Activated CD4-positive, alpha-beta memory T cell treated with anti-CD3 and anti-CD28 coated beads for 36 hours (primary cell): ENCODE measurements at regions of chrX and their contacts with region 1.

Region 1: GRCh38 chrX:153947009-153947769 is 2.7 kb upstream of the RENBP start:
- DNase-seq: peak; percentile 85
- H3K4me3 Mint-ChIP-seq: no peak overlapping the region
- H3K27ac Mint-ChIP-seq: peak overlapping the region; percentile 82
- H3K4me1 Mint-ChIP-seq: peaks cover 7% of the 10 kb centered on the region
- H3K27me3 Mint-ChIP-seq: no peaks in the 10 kb centered on the region

Region 2: GRCh38 chrX:153560000-153560399 is 387.2 kb before region 1 on chrX:
- CTCF ChIA-PET with region 1: no interaction called
- POLR2A ChIA-PET with region 1: no interaction called
- intact Hi-C with region 1: no loop called
- DNase-seq: no peak
- H3K4me3 Mint-ChIP-seq: no peak overlapping the region
- H3K27ac Mint-ChIP-seq: no peak overlapping the region
- H3K4me1 Mint-ChIP-seq: no peaks in the 10 kb centered on the region
- H3K27me3 Mint-ChIP-seq: no peaks in the 10 kb centered on the region

Region 3: DNA sequence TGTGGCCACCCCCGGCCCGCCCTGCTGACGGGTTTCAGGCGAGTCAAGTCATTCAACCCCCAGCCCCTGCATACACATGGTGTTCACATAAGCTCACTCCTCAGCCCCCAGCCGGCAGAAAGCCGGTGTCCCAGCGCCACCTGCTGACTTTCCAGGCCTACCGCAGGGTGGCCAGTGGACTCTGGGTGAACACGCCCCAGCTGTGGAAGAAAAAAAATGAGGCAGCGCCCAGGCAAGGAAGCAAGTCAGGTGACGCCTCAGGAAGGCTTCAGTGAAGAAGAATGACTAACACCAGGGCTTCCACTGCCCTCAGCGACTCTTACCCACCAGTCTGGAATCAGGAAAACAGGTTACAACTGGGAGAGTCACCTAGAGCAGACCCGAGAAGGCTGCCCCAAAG is 238.8 kb before region 1 on chrX:
- CTCF ChIA-PET with region 1: no interaction called
- POLR2A ChIA-PET with region 1: no interaction called
- intact Hi-C with region 1: no loop called
- DNase-seq: peak; percentile 65
- H3K4me3 Mint-ChIP-seq: no peak overlapping the region
- H3K27ac Mint-ChIP-seq: peak overlapping the region; percentile 23
- H3K4me1 Mint-ChIP-seq: peaks cover 7% of the 10 kb centered on the region
- H3K27me3 Mint-ChIP-seq: no peaks in the 10 kb centered on the region

Region 4: DNA sequence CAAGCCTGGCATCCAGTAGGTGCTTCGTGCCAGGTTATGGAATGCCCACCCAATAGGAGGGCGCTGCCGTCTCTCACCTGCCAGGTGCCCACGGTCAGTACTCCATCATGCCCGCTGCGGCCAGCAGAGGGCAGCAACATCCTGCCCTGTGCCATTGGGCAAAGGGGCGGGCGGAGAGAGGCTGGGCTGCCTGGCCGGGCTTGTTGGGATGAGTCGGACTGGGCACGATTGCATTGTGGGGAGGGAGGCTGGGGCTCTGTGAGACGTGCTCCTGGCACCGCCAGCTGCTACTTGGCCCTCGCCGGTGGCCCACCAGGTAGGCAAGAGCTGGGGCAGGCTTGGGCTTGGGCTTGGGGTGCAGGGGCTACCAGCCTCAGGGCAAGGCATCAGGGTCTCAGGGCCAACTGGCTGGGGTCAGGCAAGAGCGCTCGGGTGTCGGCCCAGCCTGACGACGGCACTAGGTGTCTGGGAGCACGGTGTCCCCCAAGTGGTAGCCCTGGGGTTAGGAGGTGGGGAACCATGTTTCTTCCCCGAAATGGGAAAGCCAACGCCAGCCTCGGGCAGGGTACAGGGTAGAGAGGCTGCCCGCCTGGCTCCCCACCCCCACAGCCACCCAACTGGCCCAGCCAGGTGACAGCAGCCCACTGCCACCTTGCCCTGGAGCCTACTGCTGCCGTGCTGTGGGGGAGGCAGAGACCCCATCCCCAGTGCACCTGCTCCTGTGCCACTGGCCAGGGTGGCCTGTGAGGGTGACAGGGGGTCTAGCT is 183.0 kb before region 1 on chrX and contains the start of gene PLXNB3:
- CTCF ChIA-PET with region 1: interaction called, 24 read pairs
- POLR2A ChIA-PET with region 1: interaction called, 3 read pairs
- intact Hi-C with region 1: loop called (anchors 1 kb)
- DNase-seq: peak; percentile 84
- H3K4me3 Mint-ChIP-seq: no peak within 1 kb of the TSS
- H3K27ac Mint-ChIP-seq: no peak within 1 kb of the TSS
- H3K4me1 Mint-ChIP-seq: peaks cover 9% of the 10 kb centered on the region
- H3K27me3 Mint-ChIP-seq: no peaks in the 10 kb centered on the region
- total RNA-seq, gene PLXNB3: 0.29 to 0.69 TPM

Region 5: DNA sequence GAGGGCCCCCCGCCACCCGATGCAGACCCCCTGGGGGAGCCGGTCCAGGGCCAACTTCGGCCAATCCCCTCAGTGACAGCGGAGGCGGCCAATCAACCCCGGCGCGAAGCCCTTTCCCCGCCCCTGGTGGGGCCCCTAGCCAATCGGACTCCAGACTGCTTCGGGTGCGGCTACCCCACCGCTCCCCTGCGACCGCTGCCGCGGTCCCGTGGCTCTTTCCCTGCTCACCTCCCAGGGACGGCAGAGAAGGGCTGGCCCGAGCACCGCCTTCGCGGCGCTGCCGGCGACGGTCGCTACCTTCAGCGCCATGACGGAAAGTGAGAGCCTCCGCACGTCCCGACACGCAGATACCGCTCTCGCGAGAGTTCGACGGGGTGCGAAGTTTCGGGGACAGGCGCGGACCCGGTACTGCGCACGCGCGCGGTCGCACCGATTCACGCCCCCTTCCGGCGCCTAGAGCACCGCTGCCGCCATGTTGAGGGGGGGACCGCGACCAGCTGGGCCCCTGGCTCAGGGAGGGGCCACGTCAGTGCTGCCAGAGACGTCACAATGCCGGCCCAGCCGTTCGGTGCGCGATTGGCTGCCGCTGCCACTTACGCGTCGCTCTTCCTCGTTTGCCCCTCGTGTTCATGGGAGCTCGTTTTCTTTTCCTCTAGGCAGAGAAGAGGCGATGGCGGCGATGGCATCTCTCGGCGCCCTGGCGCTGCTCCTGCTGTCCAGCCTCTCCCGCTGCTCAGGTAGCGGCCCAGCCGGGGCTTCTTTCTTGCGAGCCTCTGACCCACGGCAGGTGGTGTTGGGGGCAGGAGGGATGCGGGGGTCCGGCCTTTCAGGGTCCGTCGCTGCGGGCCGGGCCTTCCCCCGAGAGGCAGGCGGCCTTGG is 152.9 kb before region 1 on chrX and contains the starts of genes IDH3G and SSR4:
- CTCF ChIA-PET with region 1: interaction called, 4 read pairs
- POLR2A ChIA-PET with region 1: no interaction called
- intact Hi-C with region 1: loop called (anchors 1 kb)
- DNase-seq: peak; percentile 95
- H3K4me3 Mint-ChIP-seq: peak within 1 kb of the TSS; percentile 90
- H3K27ac Mint-ChIP-seq: peak within 1 kb of the TSS; percentile 80
- H3K4me1 Mint-ChIP-seq: peaks cover 18% of the 10 kb centered on the region
- H3K27me3 Mint-ChIP-seq: no peaks in the 10 kb centered on the region
- total RNA-seq, gene IDH3G: 45.9 to 51.5 TPM
- total RNA-seq, gene SSR4: 194 to 203 TPM

Region 6: DNA sequence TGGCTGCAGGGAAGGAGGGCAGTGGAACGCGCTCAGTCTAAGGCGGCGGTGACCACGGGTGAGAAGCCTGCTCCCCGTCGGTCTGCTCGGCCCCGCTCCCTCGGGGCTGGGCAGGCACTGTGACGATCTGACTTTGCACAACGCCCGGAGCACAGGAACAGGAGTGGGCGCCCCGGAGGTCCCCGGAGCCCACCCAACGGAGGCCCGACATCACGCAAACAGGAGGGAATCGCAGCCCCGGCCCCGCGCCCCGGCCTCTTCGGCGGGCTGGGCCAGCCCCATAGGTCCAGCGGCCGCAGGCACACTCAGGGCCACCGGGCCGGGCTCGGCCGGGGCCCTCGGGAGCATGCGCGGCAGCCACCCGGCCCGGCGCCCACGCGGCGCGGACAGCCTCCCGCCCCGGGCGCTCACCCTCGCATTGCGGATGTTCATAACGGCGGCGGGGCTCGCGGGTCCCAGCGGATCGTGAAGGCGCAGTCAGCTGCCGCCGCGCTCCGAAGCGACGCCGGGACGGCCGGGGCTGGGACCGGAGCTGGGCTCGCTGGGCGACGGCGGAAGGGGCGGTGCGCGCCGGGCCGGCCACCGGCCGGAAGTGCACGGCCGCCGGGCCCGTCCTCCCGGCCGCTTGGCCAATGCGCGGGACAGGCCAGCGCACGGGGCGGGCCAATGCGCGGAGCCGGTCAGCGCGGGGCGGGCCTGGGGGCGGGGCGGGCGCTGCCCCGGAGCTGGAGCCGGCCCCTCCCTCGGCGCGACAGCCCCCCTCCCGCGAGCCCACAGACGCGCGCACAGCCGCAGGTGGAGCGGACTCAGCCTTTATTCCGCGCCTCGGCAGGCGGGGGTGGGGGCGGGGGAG is 12.5 kb before region 1 on chrX and contains the start of gene NAA10:
- CTCF ChIA-PET with region 1: interaction called, 93 read pairs
- POLR2A ChIA-PET with region 1: interaction called, 3 read pairs
- intact Hi-C with region 1: loop called (anchors 1 kb)
- DNase-seq: peak; percentile 73
- H3K4me3 Mint-ChIP-seq: peak within 1 kb of the TSS; percentile 88
- H3K27ac Mint-ChIP-seq: peak within 1 kb of the TSS; percentile 74
- H3K4me1 Mint-ChIP-seq: peaks cover 32% of the 10 kb centered on the region
- H3K27me3 Mint-ChIP-seq: no peaks in the 10 kb centered on the region
- total RNA-seq, gene NAA10: 106 to 115 TPM

Region 7: GRCh38 chrX:153963546-153963945 is 16.4 kb after region 1 on chrX:
- CTCF ChIA-PET with region 1: interaction called, 31 read pairs
- POLR2A ChIA-PET with region 1: interaction called, 4 read pairs
- intact Hi-C with region 1: loop called (anchors 2 kb)
- DNase-seq: no peak
- H3K4me3 Mint-ChIP-seq: no peak overlapping the region
- H3K27ac Mint-ChIP-seq: no peak overlapping the region
- H3K4me1 Mint-ChIP-seq: peaks cover 25% of the 10 kb centered on the region
- H3K27me3 Mint-ChIP-seq: no peaks in the 10 kb centered on the region

Region 8: GRCh38 chrX:154002215-154002719 is 55.1 kb after region 1 on chrX:
- CTCF ChIA-PET with region 1: no interaction called
- POLR2A ChIA-PET with region 1: no interaction called
- intact Hi-C with region 1: no loop called
- DNase-seq: peak; percentile 70
- H3K4me3 Mint-ChIP-seq: peak overlapping the region; percentile 65
- H3K27ac Mint-ChIP-seq: peak overlapping the region; percentile 87
- H3K4me1 Mint-ChIP-seq: peaks cover 11% of the 10 kb centered on the region
- H3K27me3 Mint-ChIP-seq: no peaks in the 10 kb centered on the region

Region 9: DNA sequence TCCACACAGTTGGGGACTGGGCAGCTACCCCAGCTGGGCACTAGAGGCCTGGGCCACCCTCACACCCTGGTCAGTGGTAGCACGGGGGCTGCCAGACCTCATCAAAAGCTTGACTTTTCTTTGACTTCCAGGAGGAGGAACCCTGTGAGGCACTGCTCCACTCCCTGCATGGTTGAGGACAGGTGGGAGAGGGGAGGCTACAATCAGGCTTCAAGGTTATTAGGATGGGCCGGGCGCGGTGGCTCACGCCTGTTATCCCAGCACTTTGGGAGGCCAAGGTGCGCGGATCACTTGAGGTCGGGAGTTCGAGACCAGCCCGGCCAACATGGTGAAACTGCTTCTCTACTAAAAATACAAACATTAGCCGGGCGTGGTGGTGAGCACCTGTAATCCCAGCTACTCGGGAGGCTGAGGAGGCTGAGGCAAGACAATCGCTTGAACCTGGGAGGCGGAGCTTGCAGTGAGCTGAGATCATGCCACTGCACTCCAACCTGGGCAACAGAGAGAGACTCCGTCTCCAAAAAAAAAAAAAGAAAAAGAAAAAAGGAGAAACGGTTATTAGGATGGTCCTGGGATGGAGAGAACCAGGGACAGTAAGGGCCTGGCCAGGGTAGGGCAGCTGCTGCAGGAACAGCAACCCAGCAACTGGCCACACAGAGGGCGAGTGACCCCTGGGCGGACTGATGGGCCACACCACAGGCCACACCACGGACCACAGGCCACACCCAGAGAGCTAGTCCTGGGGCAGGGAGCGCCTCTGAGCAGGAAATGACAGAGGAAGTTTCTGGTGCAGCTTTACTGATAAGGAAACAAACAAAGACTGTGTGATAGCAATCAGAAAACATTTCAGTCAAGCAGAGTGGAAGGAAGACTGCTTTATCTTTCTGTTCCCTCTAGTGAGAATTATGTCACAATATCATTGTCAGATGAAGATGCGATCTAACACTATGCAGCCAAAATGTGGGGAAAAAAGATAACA is 176.3 kb after region 1 on chrX:
- CTCF ChIA-PET with region 1: no interaction called
- POLR2A ChIA-PET with region 1: no interaction called
- intact Hi-C with region 1: no loop called
- DNase-seq: peak; percentile 47
- H3K4me3 Mint-ChIP-seq: no peak overlapping the region
- H3K27ac Mint-ChIP-seq: peak overlapping the region; percentile 35
- H3K4me1 Mint-ChIP-seq: peaks cover 12% of the 10 kb centered on the region
- H3K27me3 Mint-ChIP-seq: no peaks in the 10 kb centered on the region